ENCODE measurements at regions of chr11 and their contacts with region 1.

Region 1: DNA sequence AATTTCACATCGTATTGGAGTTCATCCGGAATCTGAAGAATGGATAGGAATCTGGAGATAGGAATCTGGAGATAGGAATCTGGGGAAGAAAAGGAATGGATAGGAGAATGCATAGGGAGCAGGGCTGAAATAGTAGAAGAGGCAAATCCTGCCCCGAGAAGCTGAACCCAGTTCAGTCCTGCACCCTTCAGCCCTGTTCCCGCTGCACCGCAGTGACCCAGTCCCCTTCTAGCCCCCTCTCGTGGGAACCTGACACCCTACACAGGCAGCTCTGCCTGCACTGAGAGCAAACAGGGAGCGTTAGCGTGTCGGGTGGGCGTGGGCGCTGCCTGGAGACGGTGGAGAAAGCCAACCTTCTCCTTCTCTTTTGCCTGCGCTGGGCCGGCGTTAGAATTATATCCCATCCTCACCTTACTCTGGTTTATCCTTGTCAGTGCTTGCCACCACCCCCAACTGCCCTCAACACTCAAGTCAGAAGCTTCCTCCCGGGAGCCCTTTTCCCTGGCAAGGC is 1.0 kb upstream of the CCKBR start:
- DNase-seq: no peak
- ATAC-seq: peak in 5 of 8 donors; percentile 19 to 54 (median 37)
- H3K4me3 ChIP-seq: peak overlapping the region in 9 of 10 donors; percentile 21 to 54 (median 46)
- H3K27ac ChIP-seq: no peak overlapping the region
- H3K4me1 ChIP-seq: peaks cover 3 to 16% (median 13%) of the 10 kb centered on the region in 9 donors
- H3K27me3 ChIP-seq: peaks cover 5 to 80% (median 32%) of the 10 kb centered on the region in 7 donors
- CTCF ChIP-seq: peak in 1 of 9 donors; percentile 9

Region 2: DNA sequence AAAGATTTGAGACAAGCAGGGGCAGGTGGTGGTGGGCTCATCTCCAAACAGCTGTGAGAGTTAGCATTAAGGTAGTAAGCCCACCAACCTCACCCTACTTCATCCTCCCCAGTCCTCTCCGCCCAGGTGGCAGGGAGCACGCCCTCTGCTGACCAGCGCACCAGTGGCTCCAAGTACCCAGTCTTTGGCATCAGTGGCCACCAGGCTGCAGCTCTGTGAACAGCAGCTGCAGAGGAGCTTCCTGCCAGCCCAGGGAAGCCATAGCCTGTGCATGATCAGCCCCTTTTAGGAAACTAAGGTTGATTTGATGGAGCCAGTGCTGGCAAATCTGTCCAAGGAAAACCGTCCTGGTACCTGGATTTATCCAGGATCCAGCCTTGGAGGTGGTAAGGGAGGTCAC is 40.0 kb after region 1 on chr11:
- intact Hi-C with region 1: loop called in 2 of 10 experiments (anchors 5 kb)
- DNase-seq: peak; percentile 33 to 54
- ATAC-seq: peak in 6 of 8 donors; percentile 43 to 88 (median 74)
- H3K4me3 ChIP-seq: no peak overlapping the region
- H3K27ac ChIP-seq: no peak overlapping the region
- H3K4me1 ChIP-seq: no peaks in the 10 kb centered on the region
- H3K27me3 ChIP-seq: no peaks in the 10 kb centered on the region
- CTCF ChIP-seq: peak; percentile 19 to 75 (median 64)

Measured in heart right ventricle (tissue), 16 donors.